CD4-positive, alpha-beta memory T cell (primary cell): ENCODE measurements at regions of chr13 and their contacts with region 1.

Region 1: GRCh38 chr13:27293873-27294515 is 23.4 kb downstream of the RASL11A start:
- DNase-seq: peak in 4 of 5 donors; percentile 4 to 26 (median 20)
- H3K4me3 ChIP-seq: no peak overlapping the region
- H3K4me3 Mint-ChIP-seq: peak overlapping the region in 7 of 8 donors; percentile 3 to 76 (median 65)
- H3K27ac ChIP-seq: peak overlapping the region; percentile 1
- H3K27ac Mint-ChIP-seq: peak overlapping the region; percentile 56 to 94 (median 86)
- H3K4me1 ChIP-seq: peaks cover 30% of the 10 kb centered on the region
- H3K4me1 Mint-ChIP-seq: peaks cover 19 to 27% (median 23%) of the 10 kb centered on the region in 4 donors
- H3K27me3 ChIP-seq: no peaks in the 10 kb centered on the region
- H3K27me3 Mint-ChIP-seq: peaks cover 0 to 5% of the 10 kb centered on the region in 2 donors

Region 2: DNA sequence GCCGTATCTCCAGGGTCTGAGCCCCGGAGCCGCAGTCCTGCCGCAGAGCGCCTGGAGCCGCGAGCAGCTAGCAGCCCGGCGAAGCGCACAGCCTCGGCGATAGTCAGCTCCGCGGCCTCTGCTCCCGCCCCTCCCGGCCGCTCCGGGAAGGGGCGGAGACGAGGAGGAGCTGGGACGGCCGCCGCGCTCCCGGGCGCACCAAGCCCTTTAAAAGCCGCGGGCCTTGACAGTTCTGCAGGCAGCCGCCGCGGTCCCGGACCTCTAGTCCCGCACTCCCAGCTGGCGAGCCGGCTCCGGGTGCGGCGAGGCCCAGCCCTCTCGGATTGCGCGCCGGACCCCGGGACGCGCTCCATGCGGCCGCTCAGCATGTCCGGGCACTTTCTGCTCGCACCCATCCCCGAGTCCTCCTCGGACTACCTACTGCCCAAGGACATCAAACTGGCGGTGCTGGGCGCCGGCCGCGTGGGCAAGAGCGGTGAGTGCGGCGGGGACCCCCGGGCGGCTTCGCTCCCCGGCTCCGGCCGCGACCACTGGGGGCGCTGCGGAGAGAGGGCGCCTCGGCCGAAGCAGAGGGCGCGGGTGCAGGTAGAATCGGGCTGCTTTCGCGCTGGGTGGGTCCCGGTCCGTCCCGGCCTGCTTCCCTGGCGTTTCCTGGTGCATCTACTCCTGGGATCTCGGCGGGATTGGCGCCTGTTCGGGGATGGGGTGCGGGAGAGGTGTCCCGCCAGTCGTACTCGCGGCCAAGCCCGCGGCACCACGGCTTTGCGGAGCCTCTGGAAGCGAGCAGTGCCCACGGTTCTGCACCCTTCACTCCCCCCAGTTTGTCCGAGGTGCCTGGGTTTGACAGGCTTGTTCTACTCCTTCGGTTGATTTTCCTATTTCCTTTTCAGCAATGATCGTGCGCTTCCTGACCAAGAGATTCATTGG is 23.1 kb before region 1 on chr13 and contains the start of gene RASL11A:
- CTCF ChIA-PET with region 1: interaction called, 18 read pairs
- POLR2A ChIA-PET with region 1: interaction called, 3 read pairs
- intact Hi-C with region 1: no loop called
- DNase-seq: peak; percentile 62 to 76 (median 69)
- H3K4me3 ChIP-seq: peak within 1 kb of the TSS; percentile 58 to 73
- H3K4me3 Mint-ChIP-seq: peak within 1 kb of the TSS; percentile 87 to 93 (median 90)
- H3K27ac ChIP-seq: peak within 1 kb of the TSS; percentile 52
- H3K27ac Mint-ChIP-seq: peak within 1 kb of the TSS in 6 of 7 donors; percentile 25 to 84 (median 70)
- H3K4me1 ChIP-seq: peaks cover 8% of the 10 kb centered on the region
- H3K4me1 Mint-ChIP-seq: peaks cover 7 to 13% (median 11%) of the 10 kb centered on the region in 4 donors
- H3K27me3 ChIP-seq: peaks cover 6% of the 10 kb centered on the region
- H3K27me3 Mint-ChIP-seq: peaks cover 10 to 18% of the 10 kb centered on the region in 2 donors
- total RNA-seq, gene RASL11A: 0.78 to 0.96 TPM

Region 3: DNA sequence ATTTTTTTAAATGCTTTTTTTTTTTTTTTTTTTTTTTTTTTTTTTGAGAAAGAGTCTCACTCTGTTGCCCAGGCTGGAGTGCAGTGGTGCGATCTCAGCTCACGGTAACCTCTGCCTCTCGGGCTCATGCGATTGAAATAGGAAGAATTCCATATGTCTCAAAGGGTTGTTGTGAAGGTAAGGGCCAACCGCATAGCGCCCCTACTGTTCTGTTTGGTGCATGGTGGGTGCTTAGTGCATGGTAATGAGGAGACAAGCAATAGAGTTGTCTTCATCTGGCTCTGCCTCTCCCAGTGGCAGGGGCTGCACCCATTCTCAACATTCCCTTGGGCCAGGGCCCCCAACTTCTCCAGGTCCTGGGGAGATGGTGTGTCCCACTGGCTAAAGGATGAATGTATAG is 45.3 kb after region 1 on chr13:
- CTCF ChIA-PET with region 1: interaction called, 3 read pairs
- POLR2A ChIA-PET with region 1: no interaction called
- intact Hi-C with region 1: loop called (anchors 5 kb)
- DNase-seq: peak in 4 of 5 donors; percentile 11 to 33 (median 28)
- H3K4me3 ChIP-seq: no peak overlapping the region
- H3K4me3 Mint-ChIP-seq: no peak overlapping the region
- H3K27ac ChIP-seq: no peak overlapping the region
- H3K27ac Mint-ChIP-seq: no peak overlapping the region
- H3K4me1 ChIP-seq: no peaks in the 10 kb centered on the region
- H3K4me1 Mint-ChIP-seq: peaks cover 0 to 4% (median 1%) of the 10 kb centered on the region in 4 donors
- H3K27me3 ChIP-seq: no peaks in the 10 kb centered on the region
- H3K27me3 Mint-ChIP-seq: peaks cover 6 to 21% of the 10 kb centered on the region in 2 donors